Adrenal gland (tissue), 19 donors: ENCODE measurements at regions of chr15 and their contacts with region 1.

Region 1: DNA sequence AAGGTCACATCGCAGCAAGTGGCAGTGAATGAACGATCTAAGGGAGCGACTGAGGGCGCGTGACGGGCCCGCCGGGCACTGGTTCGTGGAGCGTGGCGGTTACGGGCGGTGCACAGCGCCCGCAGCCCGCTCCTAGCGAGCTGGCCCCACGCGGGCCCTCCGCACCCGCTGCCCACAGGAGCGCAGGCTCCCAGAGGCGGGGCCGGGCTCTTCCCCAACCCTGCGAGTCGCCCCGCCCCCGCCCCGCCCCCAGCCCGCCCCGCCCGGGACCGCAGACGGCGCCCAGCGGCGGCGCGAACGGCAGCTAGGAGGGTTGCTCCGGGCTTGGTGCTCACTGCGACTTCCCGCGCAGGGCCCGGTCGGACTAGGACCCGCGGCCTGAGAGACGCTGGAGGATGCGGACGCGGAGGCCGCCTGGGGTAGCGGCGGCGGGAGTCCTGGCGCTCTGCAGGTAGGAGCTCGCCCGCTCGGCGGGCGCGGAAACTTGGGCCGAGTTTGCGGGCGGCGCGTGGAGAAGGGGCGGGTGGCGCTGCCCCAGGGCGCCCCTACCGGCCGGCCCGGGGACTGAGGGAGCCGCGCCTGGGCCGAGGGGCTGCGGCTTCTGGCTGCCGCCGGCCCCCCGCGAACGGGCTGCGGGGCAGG is at the start of gene C15orf39:
- DNase-seq: peak; percentile 67 to 84 (median 76)
- H3K4me3 ChIP-seq: peak within 1 kb of the TSS; percentile 32 to 98 (median 80)
- H3K27ac ChIP-seq: peak within 1 kb of the TSS; percentile 92 to 99 (median 95)
- H3K4me1 ChIP-seq: peaks cover 29 to 47% of the 10 kb centered on the region in 2 donors
- H3K27me3 ChIP-seq: no peaks in the 10 kb centered on the region
- CTCF ChIP-seq: peak in 4 of 6 experiments; percentile 52 to 97 (median 96)
- POLR2A ChIP-seq: peak; percentile 82 to 88
- total RNA-seq, gene C15orf39: 10.5 to 50.6 (median 31.5) TPM

Region 2: GRCh38 chr15:75029378-75030022 is 172.2 kb before region 1 on chr15:
- intact Hi-C with region 1: loop called (anchors 5 kb)
- DNase-seq: peak; percentile 95 to 98 (median 97)
- H3K4me3 ChIP-seq: no peak overlapping the region
- H3K27ac ChIP-seq: peak overlapping the region; percentile 49 to 91 (median 73)
- H3K4me1 ChIP-seq: peaks cover 36 to 40% of the 10 kb centered on the region in 2 donors
- H3K27me3 ChIP-seq: no peaks in the 10 kb centered on the region
- CTCF ChIP-seq: peak; percentile 91 to 99 (median 96)
- POLR2A ChIP-seq: peak in 1 of 2 donors; percentile 39

Region 3: GRCh38 chr15:75042730-75043508 is 158.8 kb before region 1 on chr15:
- intact Hi-C with region 1: loop called (anchors 5 kb)
- DNase-seq: peak; percentile 89 to 98 (median 97)
- H3K4me3 ChIP-seq: peak overlapping the region in 1 of 4 donors; percentile 18
- H3K27ac ChIP-seq: peak overlapping the region; percentile 89 to 98 (median 95)
- H3K4me1 ChIP-seq: peaks cover 45 to 70% of the 10 kb centered on the region in 2 donors
- H3K27me3 ChIP-seq: no peaks in the 10 kb centered on the region
- CTCF ChIP-seq: peak; percentile 21 to 85 (median 75)
- POLR2A ChIP-seq: no peak

Region 4: DNA sequence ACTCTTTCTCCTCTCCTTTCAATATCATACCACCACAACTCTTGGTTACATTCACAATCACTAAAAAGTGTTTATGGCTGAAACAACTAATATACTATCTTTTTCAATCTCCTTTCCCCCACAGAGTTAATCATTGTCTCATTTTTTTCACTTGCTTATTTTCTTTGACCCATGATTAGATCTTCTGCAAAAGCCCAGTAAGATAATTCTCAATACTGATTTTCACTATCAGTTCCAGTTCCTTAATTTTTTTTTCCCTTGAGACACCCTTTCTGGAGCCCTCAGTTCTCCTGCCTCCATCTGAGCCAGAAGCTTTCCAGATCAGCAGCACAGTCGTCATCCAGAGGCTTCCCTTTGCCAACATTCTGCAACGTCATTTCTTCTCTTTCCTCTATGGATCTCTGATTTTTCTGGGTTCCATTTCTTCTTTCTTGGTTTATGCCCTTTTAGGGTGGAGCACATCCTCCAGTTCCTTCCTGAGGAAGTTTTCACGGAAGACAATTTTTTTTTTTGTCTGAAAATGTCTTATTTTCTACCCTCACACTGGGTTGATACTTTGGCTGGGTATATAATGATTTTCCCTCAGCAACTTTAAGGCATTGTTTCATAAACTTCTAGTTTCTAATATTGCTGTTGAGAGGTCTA is 88.8 kb before region 1 on chr15:
- intact Hi-C with region 1: loop called in 1 of 2 experiments (anchors 5 kb)
- DNase-seq: no peak
- H3K4me3 ChIP-seq: no peak overlapping the region
- H3K27ac ChIP-seq: peak overlapping the region in 1 of 5 donors; percentile 52
- H3K4me1 ChIP-seq: peaks cover 0 to 12% of the 10 kb centered on the region in 2 donors
- H3K27me3 ChIP-seq: no peaks in the 10 kb centered on the region
- CTCF ChIP-seq: no peak
- POLR2A ChIP-seq: no peak

Region 5: GRCh38 chr15:75130597-75131268 is 71.0 kb before region 1 on chr15:
- intact Hi-C with region 1: loop called in 1 of 2 experiments (anchors 5 kb)
- DNase-seq: no peak
- H3K4me3 ChIP-seq: no peak overlapping the region
- H3K27ac ChIP-seq: peak overlapping the region in 1 of 5 donors; percentile 40
- H3K4me1 ChIP-seq: peaks cover 0 to under 1% of the 10 kb centered on the region in 2 donors
- H3K27me3 ChIP-seq: no peaks in the 10 kb centered on the region
- CTCF ChIP-seq: no peak
- POLR2A ChIP-seq: no peak

Region 6: DNA sequence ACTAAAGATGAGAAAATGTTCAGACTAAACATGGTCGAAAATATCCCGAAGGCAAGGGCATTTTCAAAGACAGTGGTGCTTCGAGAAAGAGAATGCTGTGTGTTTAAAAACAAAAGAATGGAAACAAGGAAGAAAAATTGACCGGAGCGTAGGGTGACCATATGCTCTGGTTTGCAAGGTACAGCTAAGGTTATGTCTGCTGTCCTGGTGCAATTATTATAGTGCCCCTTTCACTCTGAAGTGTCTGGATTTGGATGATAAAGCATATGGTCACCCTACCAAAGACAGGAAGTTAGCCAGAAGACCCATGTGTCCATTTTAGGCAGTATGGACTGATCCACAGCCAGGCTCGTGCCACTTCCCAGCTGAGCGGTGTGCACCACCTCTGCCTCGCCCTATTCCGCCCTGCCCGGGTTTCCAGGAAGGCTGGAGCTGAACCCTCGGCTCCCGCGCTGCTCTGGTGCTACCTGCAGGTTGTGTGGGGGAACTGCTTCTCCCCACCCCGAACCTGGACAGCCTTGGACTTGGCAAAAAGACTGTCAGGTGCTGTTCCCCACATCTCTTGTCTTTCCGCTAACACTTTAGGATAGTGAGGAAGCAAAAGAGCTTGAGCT is 106.2 kb after region 1 on chr15:
- intact Hi-C with region 1: no loop called
- DNase-seq: peak in 5 of 7 donors; percentile 41 to 54 (median 50)
- H3K4me3 ChIP-seq: no peak overlapping the region
- H3K27ac ChIP-seq: no peak overlapping the region
- H3K4me1 ChIP-seq: no peaks in the 10 kb centered on the region
- H3K27me3 ChIP-seq: no peaks in the 10 kb centered on the region
- CTCF ChIP-seq: peak in 5 of 6 experiments; percentile 15 to 48 (median 24)
- POLR2A ChIP-seq: no peak

Region 7: DNA sequence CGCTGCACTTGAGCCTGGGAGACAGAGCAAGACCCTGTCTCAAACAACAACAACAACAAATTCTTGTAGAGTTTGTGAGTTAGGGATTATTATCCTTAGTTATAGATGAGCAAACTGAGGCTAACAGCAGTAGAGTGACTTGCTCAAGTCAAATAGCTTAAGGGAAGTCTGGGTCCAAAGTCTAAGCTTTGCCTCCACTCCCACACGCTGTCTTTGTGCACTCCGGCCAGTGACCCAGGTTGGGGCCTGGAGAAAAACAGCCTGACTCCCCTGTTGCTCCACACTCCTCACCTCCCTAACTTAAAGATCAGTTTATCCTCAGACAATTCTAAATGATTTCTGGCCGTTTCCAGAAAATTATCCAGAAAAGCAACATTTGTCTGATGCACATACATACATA is 258.9 kb after region 1 on chr15:
- intact Hi-C with region 1: no loop called
- DNase-seq: no peak
- H3K4me3 ChIP-seq: no peak overlapping the region
- H3K27ac ChIP-seq: no peak overlapping the region
- H3K4me1 ChIP-seq: peaks cover 5 to 6% of the 10 kb centered on the region in 2 donors
- H3K27me3 ChIP-seq: no peaks in the 10 kb centered on the region
- CTCF ChIP-seq: no peak
- POLR2A ChIP-seq: no peak